ENCODE measurements at regions of chr16 and their contacts with region 1.

Region 1: DNA sequence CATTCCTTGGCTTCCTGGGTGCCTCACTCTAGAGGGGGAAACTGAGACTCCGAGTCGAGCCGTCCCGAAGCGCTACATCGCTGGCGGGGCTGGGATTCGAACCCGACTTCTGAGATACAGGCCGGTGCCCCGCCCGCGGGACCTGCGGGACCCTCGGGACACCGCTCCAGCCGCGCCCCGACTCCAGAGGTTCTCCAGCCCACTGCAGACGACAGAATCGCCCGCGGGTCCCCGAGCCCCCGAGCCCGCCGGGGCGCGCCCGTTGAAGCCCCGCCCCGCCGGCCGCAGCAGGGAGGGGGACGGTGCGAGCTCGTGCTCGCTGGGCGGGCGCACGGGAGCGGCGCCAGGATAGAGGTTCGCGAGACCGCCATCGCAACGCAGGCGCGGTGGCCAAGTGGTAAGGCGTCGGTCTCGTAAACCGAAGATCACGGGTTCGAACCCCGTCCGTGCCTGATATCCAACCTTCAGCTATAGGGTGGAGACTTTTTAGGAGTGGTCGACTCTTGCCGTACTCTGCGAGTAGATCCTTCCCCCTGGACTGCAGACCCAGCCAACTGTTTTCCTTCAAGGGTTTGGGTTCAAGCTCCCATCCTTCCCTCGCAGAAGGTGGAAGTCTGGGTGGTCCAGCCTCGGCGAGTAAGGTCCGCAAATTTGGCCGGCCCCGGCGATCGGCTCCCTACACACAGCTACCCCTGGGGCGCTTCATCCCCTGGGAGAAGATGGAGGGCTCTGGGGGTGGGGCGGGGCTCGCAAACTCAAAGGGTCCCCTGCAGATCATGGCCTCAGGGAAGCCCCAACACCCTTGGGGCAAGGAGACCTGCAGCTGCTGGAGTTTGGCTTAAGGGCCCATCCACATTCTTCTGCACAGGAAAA is 214.6 kb downstream of the MRTFB start:
- DNase-seq: peak; percentile 74 to 87
- ATAC-seq: peak; percentile 80 to 82
- H3K4me3 ChIP-seq: peak overlapping the region; percentile 65 to 91 (median 83)
- H3K27ac ChIP-seq: peak overlapping the region; percentile 84 to 96 (median 94)
- H3K4me1 ChIP-seq: peaks cover 4 to 6% of the 10 kb centered on the region in 2 donors
- H3K27me3 ChIP-seq: no peaks in the 10 kb centered on the region
- CTCF ChIP-seq: no peak
- POLR2A ChIP-seq: peak; percentile 69 to 83

Region 2: DNA sequence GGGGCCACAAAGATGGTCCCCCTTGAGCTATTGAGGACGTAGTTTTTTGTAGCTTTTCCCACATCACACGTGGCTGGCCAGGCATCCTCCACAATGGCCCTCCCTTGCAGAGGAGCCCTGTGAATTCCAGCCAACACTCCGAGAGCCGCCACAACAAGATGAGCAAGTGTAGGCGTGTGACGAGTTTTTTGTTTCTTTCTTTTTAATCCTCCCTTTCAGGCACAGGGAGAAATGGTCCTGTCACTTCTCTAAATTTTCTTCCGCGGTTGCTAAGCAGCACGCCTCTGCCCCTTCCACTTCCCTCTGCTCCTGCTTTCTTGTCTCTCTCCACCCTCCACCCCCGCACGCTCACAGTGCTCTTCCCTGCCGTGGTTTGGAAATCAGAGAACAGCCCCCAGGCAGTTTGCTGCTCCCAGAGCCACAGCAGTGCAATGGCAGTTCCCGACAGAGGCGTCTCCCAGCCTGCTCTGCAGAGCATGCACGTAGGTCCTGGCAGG is 282.6 kb before region 1 on chr16:
- in situ Hi-C with region 1: no loop called
- intact Hi-C with region 1: loop called (anchors 10 kb)
- DNase-seq: peak in 1 of 2 donors; percentile 48
- ATAC-seq: peak; percentile 59 to 60
- H3K4me3 ChIP-seq: peak overlapping the region; percentile 45 to 56 (median 46)
- H3K27ac ChIP-seq: peak overlapping the region; percentile 41 to 76 (median 72)
- H3K4me1 ChIP-seq: peaks cover 41 to 59% of the 10 kb centered on the region in 2 donors
- H3K27me3 ChIP-seq: no peaks in the 10 kb centered on the region
- CTCF ChIP-seq: peak in 2 of 5 experiments; percentile 31 to 69
- POLR2A ChIP-seq: no peak

Region 3: GRCh38 chr16:14249291-14250032 is 36.3 kb before region 1 on chr16:
- in situ Hi-C with region 1: no loop called
- intact Hi-C with region 1: loop called (anchors 2 kb)
- DNase-seq: peak in 1 of 2 donors; percentile 30
- ATAC-seq: peak; percentile 40 to 63
- H3K4me3 ChIP-seq: no peak overlapping the region
- H3K27ac ChIP-seq: peak overlapping the region; percentile 12 to 45 (median 27)
- H3K4me1 ChIP-seq: peaks cover 0 to 3% of the 10 kb centered on the region in 2 donors
- H3K27me3 ChIP-seq: no peaks in the 10 kb centered on the region
- CTCF ChIP-seq: peak; percentile 68 to 86 (median 72)
- POLR2A ChIP-seq: no peak

Region 4: GRCh38 chr16:14632692-14633569 is 347.2 kb after region 1 on chr16 and contains the start of gene BFAR:
- in situ Hi-C with region 1: no loop called
- intact Hi-C with region 1: loop called (anchors 5 kb)
- DNase-seq: peak; percentile 99
- ATAC-seq: peak; percentile 84 to 85
- H3K4me3 ChIP-seq: peak within 1 kb of the TSS; percentile 90 to 97 (median 96)
- H3K27ac ChIP-seq: peak within 1 kb of the TSS; percentile 98 to 99 (median 98)
- H3K4me1 ChIP-seq: peaks cover 44 to 45% of the 10 kb centered on the region in 2 donors
- H3K27me3 ChIP-seq: no peaks in the 10 kb centered on the region
- CTCF ChIP-seq: no peak
- POLR2A ChIP-seq: peak; percentile 99
- total RNA-seq, gene BFAR: 39.7 to 103 (median 65.5) TPM

Measured in gastrocnemius medialis (tissue), 4 donors.